ENCODE measurements at regions of chr13 and their contacts with region 1.

Region 1: GRCh38 chr13:74056801-74057542 is 77.2 kb downstream of the KLF12 start:
- DNase-seq: peak; percentile 64
- ATAC-seq: peak; percentile 90

Region 2: GRCh38 chr13:73954808-73955207 is 102.2 kb before region 1 on chr13:
- intact Hi-C with region 1: loop called (anchors 10 kb)
- DNase-seq: no peak
- ATAC-seq: no peak

Region 3: GRCh38 chr13:73998631-73999030 is 58.3 kb before region 1 on chr13:
- intact Hi-C with region 1: no loop called
- DNase-seq: no peak
- ATAC-seq: no peak

Measured in Right ventricle myocardium inferior (tissue), 1 donor.